GM12878 (cell line): ENCODE measurements at regions of chr6 and their contacts with region 1.

Region 1: GRCh38 chr6:109382576-109383437 is 540 bp upstream of the CD164 start:
- DNase-seq: peak; percentile 82
- ATAC-seq: peak; percentile 79
- H3K4me3 ChIP-seq: peak overlapping the region; percentile 86
- H3K27ac ChIP-seq: peak overlapping the region; percentile 100
- H3K4me1 ChIP-seq: peaks cover 8% of the 10 kb centered on the region
- H3K27me3 ChIP-seq: no peaks in the 10 kb centered on the region
- CTCF ChIP-seq: peak; percentile 51 to 71 (median 60); a peak in 5 of 6 replicates
- EP300 ChIP-seq: peak in 1 of 2 experiments; percentile 69; a peak in 1 of 4 replicates
- POLR2A ChIP-seq: peak; percentile 75
- RAD21 ChIP-seq: peak; percentile 74

Region 2: GRCh38 chr6:108558372-108559096 is 824.3 kb before region 1 on chr6:
- CTCF ChIA-PET with region 1: no interaction called
- POLR2A ChIA-PET with region 1: no interaction called
- RAD21 ChIA-PET with region 1: no interaction called
- SMC1A ChIA-PET with region 1: no interaction called
- in situ Hi-C with region 1: loop called (anchors 10 kb)
- intact Hi-C with region 1: loop called (anchors 10 kb)
- DNase-seq: peak; percentile 81
- ATAC-seq: peak; percentile 71
- H3K4me3 ChIP-seq: peak overlapping the region; percentile 86
- H3K27ac ChIP-seq: peak overlapping the region; percentile 61; the same call in 1 of the 2 replicates
- H3K4me1 ChIP-seq: peaks cover 4% of the 10 kb centered on the region; the same call in 1 of the 2 replicates
- H3K27me3 ChIP-seq: peaks cover 6 to 8% of the 10 kb centered on the region in 2 experiments
- CTCF ChIP-seq: no peak
- EP300 ChIP-seq: peak in 1 of 2 experiments; percentile 21; a peak in 1 of 4 replicates
- POLR2A ChIP-seq: peak; percentile 46; the same call in 1 of the 2 replicates
- RAD21 ChIP-seq: no peak

Region 3: DNA sequence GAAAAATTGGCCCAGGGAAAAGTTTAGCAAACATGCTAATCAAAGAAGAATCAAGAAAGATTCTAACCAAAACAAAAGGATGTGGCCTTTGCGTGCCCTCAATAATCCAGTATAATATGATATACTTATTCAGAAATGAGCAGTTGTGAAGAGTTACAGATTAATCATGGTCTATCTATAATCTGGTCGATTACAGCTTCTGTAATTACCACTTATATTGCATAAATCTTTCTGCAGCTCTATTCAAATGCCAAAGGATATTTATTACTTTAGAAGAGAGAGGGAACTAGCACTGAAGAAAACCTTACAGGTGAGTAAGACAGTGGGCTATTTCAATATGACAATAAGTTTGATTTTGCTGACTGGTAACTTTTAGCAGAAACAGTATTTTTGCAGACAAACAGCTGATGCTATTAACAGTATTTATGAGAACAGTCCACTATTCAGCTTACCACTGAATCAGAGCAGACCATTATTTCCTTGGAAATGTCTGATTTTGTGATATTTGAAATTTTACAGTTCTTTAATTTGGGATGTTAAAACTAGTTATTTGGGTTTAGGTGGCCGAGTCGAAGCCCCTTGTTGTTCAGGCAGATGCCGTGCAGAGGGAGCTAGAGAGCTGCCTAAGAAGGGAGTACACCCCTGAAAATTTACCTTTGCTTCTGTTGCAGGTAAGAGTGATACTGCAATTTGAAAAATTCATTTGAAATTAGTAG is 195.2 kb before region 1 on chr6:
- CTCF ChIA-PET with region 1: interaction called, 128 read pairs
- POLR2A ChIA-PET with region 1: interaction called, 25 read pairs
- RAD21 ChIA-PET with region 1: interaction called, 87 read pairs
- SMC1A ChIA-PET with region 1: interaction called, 95 read pairs
- in situ Hi-C with region 1: loop called (anchors 5 kb)
- intact Hi-C with region 1: loop called (anchors 1 kb)
- DNase-seq: no peak
- ATAC-seq: peak; percentile 87
- H3K4me3 ChIP-seq: no peak overlapping the region
- H3K27ac ChIP-seq: no peak overlapping the region
- H3K4me1 ChIP-seq: no peaks in the 10 kb centered on the region
- H3K27me3 ChIP-seq: no peaks in the 10 kb centered on the region; a peak in 1 of 4 replicates
- CTCF ChIP-seq: peak; percentile 86 to 91 (median 90)
- EP300 ChIP-seq: no peak
- POLR2A ChIP-seq: no peak
- RAD21 ChIP-seq: peak; percentile 94

Region 4: GRCh38 chr6:109322825-109323224 is 60.0 kb before region 1 on chr6:
- CTCF ChIA-PET with region 1: no interaction called
- POLR2A ChIA-PET with region 1: no interaction called
- RAD21 ChIA-PET with region 1: no interaction called
- SMC1A ChIA-PET with region 1: no interaction called
- in situ Hi-C with region 1: no loop called
- intact Hi-C with region 1: no loop called
- DNase-seq: no peak
- ATAC-seq: peak; percentile 24; the same call in 2 of the 3 replicates
- H3K4me3 ChIP-seq: no peak overlapping the region
- H3K27ac ChIP-seq: no peak overlapping the region
- H3K4me1 ChIP-seq: peaks cover 7% of the 10 kb centered on the region
- H3K27me3 ChIP-seq: no peaks in the 10 kb centered on the region
- CTCF ChIP-seq: no peak
- EP300 ChIP-seq: no peak
- POLR2A ChIP-seq: no peak
- RAD21 ChIP-seq: no peak

Region 5: DNA sequence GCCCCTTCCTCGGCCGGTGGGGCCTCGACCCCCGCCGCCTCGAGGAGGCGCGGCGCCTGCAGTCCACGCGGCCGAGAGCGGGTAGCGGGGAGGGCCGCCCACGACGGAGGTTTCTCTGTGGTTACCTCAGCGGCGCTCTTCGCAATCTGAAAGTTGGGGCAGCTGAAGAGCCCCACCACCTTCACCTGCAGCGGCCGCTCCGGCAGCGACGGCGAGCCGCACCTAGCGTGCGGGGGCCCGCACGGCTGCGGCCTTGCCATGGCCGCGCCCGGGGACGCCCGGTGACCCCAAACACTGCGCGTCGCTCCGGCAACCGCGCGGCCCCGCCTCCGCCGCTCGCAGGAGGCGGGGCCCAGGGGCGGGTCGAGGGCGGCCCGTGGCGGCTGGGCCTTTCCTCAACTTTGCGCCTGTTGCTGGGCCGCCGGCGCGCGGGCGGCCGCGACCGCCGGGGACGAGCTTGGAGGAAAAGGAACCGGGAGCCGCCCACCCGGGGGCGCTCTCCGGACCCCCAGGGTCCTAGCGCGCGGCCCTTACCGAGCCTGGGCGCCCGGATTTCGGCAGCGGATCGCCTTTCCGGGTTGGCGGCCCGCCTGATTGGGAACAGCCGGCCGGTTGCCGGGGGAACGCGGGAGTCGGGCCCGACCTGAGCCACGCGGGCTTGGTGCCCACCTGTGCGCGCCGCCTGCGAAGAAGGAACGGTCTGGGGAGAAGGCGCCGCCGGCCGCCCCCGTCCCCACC is 57.7 kb after region 1 on chr6 and contains the starts of genes PPIL6 and SMPD2:
- CTCF ChIA-PET with region 1: interaction called, 13 read pairs
- POLR2A ChIA-PET with region 1: interaction called, 17 read pairs
- RAD21 ChIA-PET with region 1: interaction called, 3 read pairs
- SMC1A ChIA-PET with region 1: interaction called, 6 read pairs
- in situ Hi-C with region 1: no loop called
- intact Hi-C with region 1: loop called (anchors 1 kb)
- DNase-seq: no peak
- ATAC-seq: peak; percentile 91
- H3K4me3 ChIP-seq: peak within 1 kb of the TSS; percentile 87
- H3K27ac ChIP-seq: peak within 1 kb of the TSS; percentile 81
- H3K4me1 ChIP-seq: peaks cover 12% of the 10 kb centered on the region
- H3K27me3 ChIP-seq: no peaks in the 10 kb centered on the region
- CTCF ChIP-seq: peak in 2 of 3 experiments; percentile 18 to 33; a peak in 3 of 6 replicates
- EP300 ChIP-seq: no peak
- POLR2A ChIP-seq: peak; percentile 47; the same call in 1 of the 2 replicates
- RAD21 ChIP-seq: no peak
- polyA plus RNA-seq, gene PPIL6: not detected
- polyA plus RNA-seq, gene SMPD2: 0.06 to 0.73 TPM

Region 6: DNA sequence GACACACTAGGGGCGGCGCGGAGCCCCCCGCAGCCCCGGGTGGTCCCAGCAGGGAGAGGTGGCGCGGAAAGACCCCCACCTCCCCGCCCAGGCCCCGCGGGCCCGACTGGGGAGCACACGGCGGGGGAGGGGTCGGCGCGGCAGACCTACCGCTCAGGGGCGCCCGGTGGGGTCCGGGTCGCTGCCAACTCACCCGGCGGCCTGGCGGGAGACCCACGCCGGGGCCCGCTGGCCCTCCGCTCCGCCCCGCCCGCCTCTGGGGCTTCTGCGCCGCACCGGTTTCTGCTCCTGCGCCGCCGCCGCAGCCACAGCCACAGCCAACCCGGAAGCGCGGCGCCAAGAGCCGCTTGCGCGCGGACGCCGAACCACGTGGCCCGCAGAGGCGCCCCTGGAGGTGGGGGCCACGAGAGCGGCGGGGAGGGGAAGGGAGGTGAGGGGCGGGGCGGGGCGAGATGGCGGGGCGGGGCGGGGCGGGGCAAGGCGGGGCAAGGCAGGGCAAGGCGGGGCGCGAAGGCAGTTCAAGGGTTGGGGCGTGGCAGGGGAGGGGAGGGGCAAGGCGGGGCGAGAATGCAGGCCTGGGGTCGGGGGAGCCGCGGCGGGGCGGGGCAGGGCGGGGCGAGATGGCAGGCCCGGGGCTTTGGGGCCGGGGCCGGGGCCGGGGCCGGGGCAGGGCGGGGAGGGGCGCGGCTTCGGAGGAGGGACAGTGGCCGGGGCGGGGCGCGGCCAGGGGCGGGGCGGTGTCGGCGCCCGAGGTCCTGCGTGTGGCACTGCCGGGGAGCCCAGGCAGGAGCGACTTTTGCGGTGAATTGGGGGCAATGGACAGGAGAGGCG is 100.3 kb after region 1 on chr6 and contains the start of gene ZBTB24:
- CTCF ChIA-PET with region 1: interaction called, 17 read pairs
- POLR2A ChIA-PET with region 1: interaction called, 3 read pairs
- RAD21 ChIA-PET with region 1: interaction called, 8 read pairs
- SMC1A ChIA-PET with region 1: interaction called, 4 read pairs
- in situ Hi-C with region 1: no loop called
- intact Hi-C with region 1: loop called (anchors 2 kb)
- DNase-seq: peak; percentile 41
- ATAC-seq: peak; percentile 89
- H3K4me3 ChIP-seq: peak within 1 kb of the TSS; percentile 86
- H3K27ac ChIP-seq: peak within 1 kb of the TSS; percentile 73
- H3K4me1 ChIP-seq: no peaks in the 10 kb centered on the region; the same call in 1 of the 2 replicates
- H3K27me3 ChIP-seq: no peaks in the 10 kb centered on the region
- CTCF ChIP-seq: no peak
- EP300 ChIP-seq: no peak
- POLR2A ChIP-seq: peak; percentile 86
- RAD21 ChIP-seq: no peak
- polyA plus RNA-seq, gene ZBTB24: 2.9 to 3.0 TPM